K562 (cell line): ENCODE measurements at regions of chr3 and their contacts with region 1.

Region 1: DNA sequence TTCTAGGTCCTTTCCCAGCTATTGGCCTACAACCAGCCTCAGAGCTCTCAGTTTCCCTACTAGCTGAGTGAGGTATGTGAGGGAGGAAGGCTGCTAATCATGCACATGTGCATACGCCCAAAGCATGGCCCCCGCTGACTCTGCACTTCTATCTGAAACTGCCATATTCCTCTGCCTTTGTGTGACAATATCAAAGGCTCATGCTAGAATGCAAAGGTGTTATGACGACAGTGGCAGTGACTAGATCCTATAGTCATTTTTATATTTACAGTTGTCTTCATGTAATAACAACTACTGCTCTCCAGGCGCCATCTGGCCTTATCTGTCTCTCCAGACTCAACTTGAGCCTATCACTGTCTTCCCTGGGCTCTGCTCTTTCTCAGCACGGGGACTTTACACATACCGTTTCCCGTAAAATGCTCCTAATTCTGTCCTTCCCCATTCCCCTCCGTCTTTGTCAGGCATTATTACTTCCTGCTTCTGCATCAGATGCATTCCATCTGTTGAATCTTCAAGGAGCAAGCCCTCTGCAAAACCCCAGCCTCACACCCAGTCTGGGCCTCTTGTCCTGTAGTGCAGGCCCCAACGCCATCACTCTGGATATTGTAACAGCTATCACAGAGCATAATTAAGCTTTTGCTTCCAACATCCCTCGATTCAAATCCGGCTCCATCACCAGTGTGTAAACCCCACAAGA is 102.5 kb downstream of the PDCD6IP start:
- DNase-seq: peak; percentile 92 to 98 (median 94)
- ATAC-seq: peak; percentile 84
- H3K4me3 ChIP-seq: no peak overlapping the region
- H3K27ac ChIP-seq: peak overlapping the region; percentile 99
- H3K4me1 ChIP-seq: peaks cover 47 to 65% of the 10 kb centered on the region in 2 experiments
- H3K27me3 ChIP-seq: no peaks in the 10 kb centered on the region
- CTCF ChIP-seq: peak in 1 of 3 experiments; percentile 11; a peak in 1 of 6 replicates
- EP300 ChIP-seq: peak; percentile 98
- POLR2A ChIP-seq: no peak; the same call in 1 of the 2 replicates
- RAD21 ChIP-seq: peak; percentile 18 to 35; a peak in 2 of 4 replicates

Region 2: DNA sequence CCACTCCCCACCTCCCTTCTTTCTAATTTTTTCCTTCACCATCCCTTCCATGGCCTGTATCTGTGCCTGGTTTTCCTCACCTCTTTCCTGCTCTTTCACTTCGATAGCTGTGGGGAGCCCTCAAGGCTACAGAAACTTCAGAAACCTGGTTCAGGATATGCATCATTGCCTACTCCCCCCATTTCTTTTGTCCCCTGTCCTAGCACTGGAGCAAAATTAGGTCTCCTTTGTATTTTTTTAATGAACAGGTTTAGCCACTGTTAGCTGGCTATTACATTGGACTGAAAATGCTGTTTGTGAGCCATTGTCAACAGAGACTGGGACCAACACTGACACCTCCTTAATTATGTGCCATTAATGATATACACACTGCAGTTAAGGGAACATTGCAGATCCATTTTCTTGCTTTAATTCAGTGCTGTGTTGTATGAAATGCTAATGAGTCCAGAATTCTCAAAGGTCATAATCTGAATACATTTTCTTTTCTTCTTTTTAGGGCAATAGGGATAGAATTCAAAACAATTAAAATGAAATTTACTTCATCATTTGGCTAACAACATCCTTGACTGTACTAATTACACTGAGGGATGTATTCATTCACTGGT is 36.1 kb after region 1 on chr3:
- CTCF ChIA-PET with region 1: no interaction called
- POLR2A ChIA-PET with region 1: interaction called, 6 read pairs
- in situ Hi-C with region 1: no loop called
- intact Hi-C with region 1: loop called (anchors 1 kb)
- DNase-seq: peak in 1 of 4 experiments; percentile 41
- ATAC-seq: peak; percentile 50
- H3K4me3 ChIP-seq: peak overlapping the region; percentile 38
- H3K27ac ChIP-seq: peak overlapping the region; percentile 78
- H3K4me1 ChIP-seq: peaks cover 12 to 55% of the 10 kb centered on the region in 2 experiments
- H3K27me3 ChIP-seq: no peaks in the 10 kb centered on the region
- CTCF ChIP-seq: no peak
- EP300 ChIP-seq: no peak
- POLR2A ChIP-seq: no peak
- RAD21 ChIP-seq: no peak

Region 3: DNA sequence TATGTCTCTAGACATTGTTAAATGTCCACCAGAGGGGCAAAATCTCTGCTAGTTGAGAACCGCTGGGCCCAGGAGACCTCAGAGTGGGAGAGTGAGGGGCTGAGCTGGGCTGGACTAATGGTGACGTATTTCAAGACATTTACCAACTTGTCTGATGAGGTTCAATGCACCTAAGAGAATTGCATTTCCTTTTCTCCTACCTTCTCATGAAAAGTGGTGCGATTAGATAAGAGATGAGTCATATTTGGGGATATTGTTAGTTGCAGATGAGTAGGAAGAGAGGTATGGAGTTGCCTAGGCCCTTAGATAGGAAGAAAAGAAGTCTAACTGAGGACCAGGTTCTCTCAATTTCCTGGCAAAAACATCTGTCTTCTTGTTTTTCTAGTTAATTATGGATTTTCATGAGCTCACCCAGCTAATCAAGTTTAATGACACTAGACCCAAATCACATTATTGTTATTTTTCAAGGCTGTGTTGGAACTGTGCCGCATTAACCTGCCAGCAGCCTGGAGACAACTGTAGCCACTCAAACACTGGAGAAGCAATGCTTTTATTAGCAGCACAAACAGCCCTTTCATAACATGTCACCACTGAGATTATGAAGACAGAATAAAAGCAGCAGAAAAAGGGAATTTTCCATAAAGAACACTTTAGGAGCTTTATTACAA is 41.7 kb after region 1 on chr3:
- CTCF ChIA-PET with region 1: no interaction called
- POLR2A ChIA-PET with region 1: interaction called, 6 read pairs
- in situ Hi-C with region 1: no loop called
- intact Hi-C with region 1: loop called (anchors 1 kb)
- DNase-seq: peak; percentile 35 to 82 (median 60)
- ATAC-seq: peak; percentile 83
- H3K4me3 ChIP-seq: no peak overlapping the region
- H3K27ac ChIP-seq: peak overlapping the region; percentile 55
- H3K4me1 ChIP-seq: peaks cover 9 to 47% of the 10 kb centered on the region in 2 experiments; a peak in 4 of 5 replicates
- H3K27me3 ChIP-seq: no peaks in the 10 kb centered on the region
- CTCF ChIP-seq: 0 out of 6 replicates have a peak, but pooled peaks of 1 of the 3 experiments have one; percentile 11
- EP300 ChIP-seq: peak; percentile 87
- POLR2A ChIP-seq: no peak
- RAD21 ChIP-seq: 0 out of 4 replicates have a peak, but pooled peaks of 1 of the 2 experiments have one; percentile 13